Caco-2 (cell line): ENCODE measurements at regions of chr19 and their contacts with region 1.

Region 1: GRCh38 chr19:39341719-39342604 is at the start of gene SAMD4B:
- DNase-seq: peak; percentile 99 to 100
- H3K4me3 ChIP-seq: peak within 1 kb of the TSS; percentile 71
- H3K4me3 Mint-ChIP-seq: peak within 1 kb of the TSS; percentile 100
- H3K27ac Mint-ChIP-seq: peak within 1 kb of the TSS; percentile 95
- H3K4me1 ChIP-seq: peaks cover 7% of the 10 kb centered on the region
- H3K4me1 Mint-ChIP-seq: peaks cover 47% of the 10 kb centered on the region
- H3K27me3 ChIP-seq: no peaks in the 10 kb centered on the region
- H3K27me3 Mint-ChIP-seq: no peaks in the 10 kb centered on the region
- CTCF ChIP-seq: peak; percentile 68 to 79
- total RNA-seq, gene SAMD4B: 132 and 147 TPM in 2 replicates

Region 2: GRCh38 chr19:39057615-39058014 is 284.3 kb before region 1 on chr19:
- CTCF ChIA-PET with region 1: no interaction called
- POLR2A ChIA-PET with region 1: no interaction called
- intact Hi-C with region 1: no loop called
- DNase-seq: no peak
- H3K4me3 ChIP-seq: no peak overlapping the region
- H3K4me3 Mint-ChIP-seq: no peak overlapping the region
- H3K27ac Mint-ChIP-seq: no peak overlapping the region
- H3K4me1 ChIP-seq: peaks cover 18% of the 10 kb centered on the region
- H3K4me1 Mint-ChIP-seq: peaks cover 21% of the 10 kb centered on the region
- H3K27me3 ChIP-seq: no peaks in the 10 kb centered on the region
- H3K27me3 Mint-ChIP-seq: no peaks in the 10 kb centered on the region
- CTCF ChIP-seq: no peak

Region 3: GRCh38 chr19:39390755-39391592 is 49.0 kb after region 1 on chr19 and contains the starts of genes MED29 and PAF1:
- CTCF ChIA-PET with region 1: interaction called, 4 read pairs
- POLR2A ChIA-PET with region 1: interaction called, 7 read pairs
- intact Hi-C with region 1: loop called (anchors 5 kb)
- DNase-seq: peak; percentile 98 to 99
- H3K4me3 ChIP-seq: peak within 1 kb of the TSS; percentile 76
- H3K4me3 Mint-ChIP-seq: peak within 1 kb of the TSS; percentile 99
- H3K27ac Mint-ChIP-seq: peak within 1 kb of the TSS; percentile 92
- H3K4me1 ChIP-seq: peaks cover 10% of the 10 kb centered on the region
- H3K4me1 Mint-ChIP-seq: peaks cover 33% of the 10 kb centered on the region
- H3K27me3 ChIP-seq: no peaks in the 10 kb centered on the region
- H3K27me3 Mint-ChIP-seq: no peaks in the 10 kb centered on the region
- CTCF ChIP-seq: peak in 1 of 2 experiments; percentile 46
- total RNA-seq, gene MED29: 50.3 and 50.8 TPM in 2 replicates
- total RNA-seq, gene PAF1: 57.9 and 59.0 TPM in 2 replicates

Region 4: DNA sequence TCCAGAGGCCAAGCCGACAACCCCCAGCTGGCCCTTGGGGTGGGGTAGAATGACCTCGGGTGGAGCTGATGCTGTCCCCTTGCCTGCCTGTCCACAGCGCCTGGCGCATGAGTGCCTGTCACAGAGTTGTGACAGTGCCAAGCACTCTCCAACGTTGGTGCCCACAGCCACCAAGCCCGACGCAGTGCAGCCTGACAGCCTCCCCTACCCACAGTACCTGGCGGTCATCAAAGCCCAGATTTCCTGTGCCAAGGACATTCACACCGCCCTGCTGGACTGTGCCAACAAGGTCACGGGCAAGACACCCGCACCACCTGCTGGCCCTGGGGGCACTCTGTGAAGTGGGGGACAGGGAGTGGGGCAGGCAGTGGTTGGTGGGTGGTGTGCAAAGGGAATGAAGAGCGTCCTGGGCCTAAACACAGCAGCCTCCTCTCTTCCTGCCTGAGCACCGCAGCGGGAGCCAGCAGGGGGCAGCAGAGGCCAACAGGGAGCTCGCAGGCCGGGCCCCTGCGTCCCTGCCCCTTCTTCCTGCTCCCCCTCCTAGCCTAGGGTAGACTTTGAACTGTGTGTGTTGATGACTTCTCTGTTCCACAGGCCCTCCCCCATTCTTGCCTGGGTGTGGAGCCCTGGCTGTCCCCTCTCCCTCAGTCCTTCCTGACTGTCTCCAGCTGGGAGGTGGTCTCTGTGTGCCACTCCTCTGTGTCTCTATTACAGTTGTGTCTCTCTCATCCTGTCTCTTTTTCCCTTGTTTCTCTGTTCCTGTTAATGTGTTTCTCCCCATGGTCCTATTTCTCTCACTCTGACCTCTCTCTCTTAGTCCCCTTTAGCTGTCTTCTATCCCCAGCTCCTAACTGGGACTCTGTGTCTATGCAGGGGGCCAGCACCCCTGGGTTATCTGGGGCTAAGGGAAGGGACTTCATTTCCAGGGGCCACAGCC is 55.7 kb after region 1 on chr19:
- CTCF ChIA-PET with region 1: interaction called, 7 read pairs
- POLR2A ChIA-PET with region 1: interaction called, 11 read pairs
- intact Hi-C with region 1: loop called (anchors 5 kb)
- DNase-seq: peak; percentile 94 to 95
- H3K4me3 ChIP-seq: no peak overlapping the region
- H3K4me3 Mint-ChIP-seq: peak overlapping the region; percentile 49
- H3K27ac Mint-ChIP-seq: peak overlapping the region; percentile 84
- H3K4me1 ChIP-seq: peaks cover 52% of the 10 kb centered on the region
- H3K4me1 Mint-ChIP-seq: peaks cover 34% of the 10 kb centered on the region
- H3K27me3 ChIP-seq: no peaks in the 10 kb centered on the region
- H3K27me3 Mint-ChIP-seq: no peaks in the 10 kb centered on the region
- CTCF ChIP-seq: peak; percentile 98

Region 5: DNA sequence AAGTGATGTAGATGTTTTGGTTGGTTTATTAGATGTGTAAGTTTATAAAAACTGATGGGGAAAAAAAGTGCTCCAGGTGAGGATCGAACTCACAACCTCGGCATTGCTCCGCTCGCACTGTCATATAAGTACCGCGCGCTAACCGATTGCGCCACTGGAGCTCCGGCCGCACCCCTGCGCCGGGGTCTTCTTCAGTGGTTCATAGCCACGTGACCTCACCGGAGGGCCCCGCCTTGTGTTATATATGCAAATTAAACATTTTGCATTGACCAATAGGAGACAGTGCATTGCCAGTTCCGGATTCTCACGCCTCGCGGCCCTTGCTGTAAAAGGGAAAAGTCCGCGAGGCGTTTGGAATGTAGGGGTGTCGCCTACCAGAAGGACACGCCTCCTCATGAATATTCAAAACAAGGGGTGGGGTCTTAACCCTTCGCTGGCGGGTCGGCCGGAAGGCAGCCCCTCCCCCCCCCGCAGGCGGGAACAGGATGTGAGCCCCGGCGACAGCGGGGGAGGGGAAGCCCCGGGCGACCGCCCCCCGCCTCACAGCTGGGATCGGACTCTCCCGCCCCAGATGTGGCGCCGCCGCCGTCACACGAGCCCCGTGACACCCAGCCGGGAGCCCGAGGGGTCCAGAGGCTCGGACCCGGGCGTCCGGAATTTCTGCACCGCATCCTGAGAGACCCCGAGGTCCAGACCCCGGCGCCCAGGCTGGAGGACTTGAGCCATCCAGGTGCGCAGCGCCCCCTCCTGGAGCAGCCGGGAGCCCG is 70.3 kb after region 1 on chr19 and contains the start of gene PLEKHG2:
- CTCF ChIA-PET with region 1: interaction called, 3 read pairs
- POLR2A ChIA-PET with region 1: interaction called, 3 read pairs
- intact Hi-C with region 1: loop called (anchors 1 kb)
- DNase-seq: peak; percentile 99
- H3K4me3 ChIP-seq: peak within 1 kb of the TSS; percentile 88
- H3K4me3 Mint-ChIP-seq: peak within 1 kb of the TSS; percentile 77
- H3K27ac Mint-ChIP-seq: peak within 1 kb of the TSS; percentile 90
- H3K4me1 ChIP-seq: peaks cover 30% of the 10 kb centered on the region
- H3K4me1 Mint-ChIP-seq: peaks cover 40% of the 10 kb centered on the region
- H3K27me3 ChIP-seq: no peaks in the 10 kb centered on the region
- H3K27me3 Mint-ChIP-seq: peaks cover 3% of the 10 kb centered on the region
- CTCF ChIP-seq: peak; percentile 91 to 92
- total RNA-seq, gene PLEKHG2: 49.8 and 64.1 TPM in 2 replicates